ENCODE measurements at regions of chr17 and their contacts with region 1.

Region 1: DNA sequence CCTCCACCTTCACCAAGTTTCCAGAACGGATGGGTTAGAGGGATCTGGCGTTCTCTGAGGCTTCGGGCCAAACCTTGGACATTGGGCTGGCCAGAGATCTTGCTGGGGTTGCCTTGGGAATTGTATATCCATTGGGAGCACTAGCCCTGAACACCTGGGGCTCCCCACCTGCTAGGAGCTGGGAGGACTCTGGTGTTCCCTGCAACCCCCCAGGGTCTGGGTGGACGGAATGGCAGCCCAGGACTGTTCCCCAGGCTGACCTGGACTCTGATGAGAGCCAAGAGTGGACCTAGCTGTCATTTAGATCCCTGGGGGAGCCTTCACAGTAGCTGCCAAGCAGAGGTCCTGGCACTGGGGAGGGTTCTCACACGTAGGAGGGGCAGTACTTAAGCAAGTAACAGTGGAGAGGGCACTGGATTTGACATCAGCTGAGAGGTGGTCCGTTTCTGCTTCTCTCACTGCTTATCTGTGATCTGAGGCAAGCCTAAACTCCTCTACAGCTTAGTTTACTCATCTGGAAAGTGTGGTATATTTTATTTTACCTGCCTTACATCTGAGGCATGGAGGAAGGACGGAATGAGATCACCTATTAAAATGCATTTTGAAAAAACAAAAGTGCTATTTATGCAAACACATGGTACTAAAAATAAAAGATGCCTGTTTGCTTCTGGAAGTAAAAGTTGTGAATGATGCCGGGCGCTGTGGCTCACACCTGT is 11.7 kb downstream of the SOCS3 start:
- DNase-seq: no peak
- ATAC-seq: no peak
- H3K4me3 ChIP-seq: no peak overlapping the region
- H3K27ac ChIP-seq: peak overlapping the region in 1 of 2 experiments; percentile 65; a peak in 3 of 6 replicates
- H3K4me1 ChIP-seq: peaks cover 52% of the 10 kb centered on the region
- CTCF ChIP-seq: no peak
- EP300 ChIP-seq: no peak
- POLR2A ChIP-seq: no peak
- RAD21 ChIP-seq: no peak

Region 2: GRCh38 chr17:78241277-78242023 is 106.8 kb before region 1 on chr17:
- CTCF ChIA-PET with region 1: no interaction called
- POLR2A ChIA-PET with region 1: no interaction called
- DNase-seq: peak; percentile 69 to 93
- ATAC-seq: peak; percentile 44 to 89; a peak in 5 of 6 replicates
- H3K4me3 ChIP-seq: no peak overlapping the region
- H3K27ac ChIP-seq: no peak overlapping the region
- H3K4me1 ChIP-seq: no peaks in the 10 kb centered on the region
- CTCF ChIP-seq: no peak
- EP300 ChIP-seq: no peak
- POLR2A ChIP-seq: no peak
- RAD21 ChIP-seq: no peak

Region 3: GRCh38 chr17:78335209-78335608 is 13.0 kb before region 1 on chr17:
- CTCF ChIA-PET with region 1: interaction called, 10 read pairs
- POLR2A ChIA-PET with region 1: no interaction called
- DNase-seq: no peak
- ATAC-seq: no peak; a peak in 1 of 6 replicates
- H3K4me3 ChIP-seq: no peak overlapping the region; the same call in 2 of the 3 replicates
- H3K27ac ChIP-seq: peak overlapping the region; percentile 76 to 97
- H3K4me1 ChIP-seq: peaks cover 86% of the 10 kb centered on the region
- CTCF ChIP-seq: no peak
- EP300 ChIP-seq: no peak
- POLR2A ChIP-seq: no peak
- RAD21 ChIP-seq: no peak

Measured in A549 (cell line).